MCF 10A (cell line): ENCODE measurements at regions of chr20 and their contacts with region 1.

Region 1: GRCh38 chr20:17898548-17898994 is 70.0 kb downstream of the SNX5 start:
- DNase-seq: peak; percentile 78
- H3K4me3 Mint-ChIP-seq: no peak overlapping the region
- H3K27ac Mint-ChIP-seq: no peak overlapping the region
- H3K4me1 Mint-ChIP-seq: peaks cover 21% of the 10 kb centered on the region
- H3K27me3 Mint-ChIP-seq: no peaks in the 10 kb centered on the region
- CTCF ChIP-seq: peak; percentile 91

Region 2: GRCh38 chr20:17536944-17537444 is 361.6 kb before region 1 on chr20:
- CTCF ChIA-PET with region 1: interaction called, 16 read pairs
- POLR2A ChIA-PET with region 1: interaction called, 3 read pairs
- intact Hi-C with region 1: loop called (anchors 2 kb)
- DNase-seq: peak; percentile 83
- H3K4me3 Mint-ChIP-seq: no peak overlapping the region
- H3K27ac Mint-ChIP-seq: no peak overlapping the region
- H3K4me1 Mint-ChIP-seq: peaks cover 20% of the 10 kb centered on the region
- H3K27me3 Mint-ChIP-seq: no peaks in the 10 kb centered on the region
- CTCF ChIP-seq: peak; percentile 84

Region 3: GRCh38 chr20:17654649-17655285 is 243.8 kb before region 1 on chr20:
- CTCF ChIA-PET with region 1: interaction called, 16 read pairs
- POLR2A ChIA-PET with region 1: no interaction called
- intact Hi-C with region 1: loop called (anchors 1 kb)
- DNase-seq: peak; percentile 39
- H3K4me3 Mint-ChIP-seq: no peak overlapping the region
- H3K27ac Mint-ChIP-seq: no peak overlapping the region
- H3K4me1 Mint-ChIP-seq: peaks cover 15% of the 10 kb centered on the region
- H3K27me3 Mint-ChIP-seq: no peaks in the 10 kb centered on the region
- CTCF ChIP-seq: peak; percentile 44

Region 4: DNA sequence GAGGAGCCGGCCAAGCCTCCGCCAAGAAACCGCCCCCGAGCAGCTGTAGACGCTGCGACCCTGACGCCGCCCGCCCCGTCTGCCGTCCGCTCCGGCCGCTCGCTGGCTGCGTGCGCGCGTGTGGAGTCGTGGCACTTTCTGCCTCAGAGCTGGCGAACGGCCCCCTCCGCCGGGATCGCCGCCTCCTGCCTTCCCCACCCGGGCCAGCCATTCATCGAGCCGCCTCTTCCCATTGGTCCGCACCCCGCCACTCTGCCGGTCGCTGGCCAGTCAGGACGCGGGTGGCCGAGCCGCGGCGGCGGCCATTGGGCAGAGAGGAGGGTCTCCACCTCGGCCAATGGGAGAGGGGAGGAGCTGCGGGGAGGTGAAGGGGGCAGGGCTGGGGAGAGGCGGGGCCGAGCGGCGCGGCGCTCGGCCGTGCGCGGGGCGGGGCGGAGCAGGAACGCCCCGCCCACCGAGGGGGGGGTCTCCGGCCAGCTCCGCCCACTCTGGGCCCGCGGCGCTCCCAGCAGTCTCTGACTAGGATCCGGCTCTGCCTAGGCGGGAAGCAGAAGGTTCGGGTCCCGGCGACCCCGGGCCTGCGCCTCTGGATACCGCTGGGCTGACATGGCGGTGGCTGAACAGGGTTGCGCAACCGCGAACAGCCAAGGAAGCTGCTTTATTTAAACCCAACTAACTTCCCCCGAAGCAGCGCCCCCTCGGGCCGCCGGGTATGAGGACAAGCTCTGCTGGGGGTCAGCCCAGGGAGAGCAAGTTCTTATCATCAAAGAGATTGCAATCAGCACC is 216.3 kb before region 1 on chr20 and contains the start of gene RRBP1:
- CTCF ChIA-PET with region 1: interaction called, 156 read pairs
- POLR2A ChIA-PET with region 1: interaction called, 46 read pairs
- intact Hi-C with region 1: loop called (anchors 1 kb)
- DNase-seq: peak; percentile 97
- H3K4me3 Mint-ChIP-seq: peak within 1 kb of the TSS; percentile 81
- H3K27ac Mint-ChIP-seq: peak within 1 kb of the TSS; percentile 61
- H3K4me1 Mint-ChIP-seq: peaks cover 11% of the 10 kb centered on the region
- H3K27me3 Mint-ChIP-seq: peaks cover 41% of the 10 kb centered on the region
- CTCF ChIP-seq: peak; percentile 65
- total RNA-seq, gene RRBP1: 203 and 244 TPM in 2 replicates

Region 5: GRCh38 chr20:17808357-17808756 is 90.2 kb before region 1 on chr20:
- CTCF ChIA-PET with region 1: interaction called, 10 read pairs
- POLR2A ChIA-PET with region 1: no interaction called
- intact Hi-C with region 1: no loop called
- DNase-seq: no peak
- H3K4me3 Mint-ChIP-seq: no peak overlapping the region
- H3K27ac Mint-ChIP-seq: no peak overlapping the region
- H3K4me1 Mint-ChIP-seq: peaks cover 7% of the 10 kb centered on the region
- H3K27me3 Mint-ChIP-seq: no peaks in the 10 kb centered on the region
- CTCF ChIP-seq: no peak

Region 6: DNA sequence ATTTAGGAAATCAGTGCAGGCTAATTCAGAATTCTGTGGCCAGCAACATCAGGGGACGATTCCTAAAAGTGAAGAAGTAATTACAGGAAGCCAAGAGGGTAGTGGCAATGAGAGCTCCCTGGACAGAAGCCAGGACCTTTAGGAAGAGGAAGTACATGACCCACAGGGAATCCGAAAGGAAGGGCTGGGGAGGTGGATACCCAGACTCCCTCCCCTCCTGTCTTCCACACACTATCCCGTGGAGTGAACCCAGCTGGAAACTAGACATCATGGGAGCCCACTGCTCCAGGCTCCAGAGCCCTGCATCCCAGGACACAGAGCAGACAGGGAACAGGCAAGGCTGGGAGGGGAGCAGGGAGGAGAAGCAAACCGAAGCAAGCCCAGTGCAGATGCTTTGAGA is 13.0 kb before region 1 on chr20:
- CTCF ChIA-PET with region 1: interaction called, 22 read pairs
- POLR2A ChIA-PET with region 1: interaction called, 4 read pairs
- intact Hi-C with region 1: no loop called
- DNase-seq: peak; percentile 54
- H3K4me3 Mint-ChIP-seq: no peak overlapping the region
- H3K27ac Mint-ChIP-seq: no peak overlapping the region
- H3K4me1 Mint-ChIP-seq: peaks cover 17% of the 10 kb centered on the region
- H3K27me3 Mint-ChIP-seq: no peaks in the 10 kb centered on the region
- CTCF ChIP-seq: no peak

Region 7: GRCh38 chr20:18079756-18080353 is 181.3 kb after region 1 on chr20:
- CTCF ChIA-PET with region 1: no interaction called
- POLR2A ChIA-PET with region 1: no interaction called
- intact Hi-C with region 1: no loop called
- DNase-seq: no peak
- H3K4me3 Mint-ChIP-seq: no peak overlapping the region
- H3K27ac Mint-ChIP-seq: no peak overlapping the region
- H3K4me1 Mint-ChIP-seq: no peaks in the 10 kb centered on the region
- H3K27me3 Mint-ChIP-seq: no peaks in the 10 kb centered on the region
- CTCF ChIP-seq: no peak

Region 8: DNA sequence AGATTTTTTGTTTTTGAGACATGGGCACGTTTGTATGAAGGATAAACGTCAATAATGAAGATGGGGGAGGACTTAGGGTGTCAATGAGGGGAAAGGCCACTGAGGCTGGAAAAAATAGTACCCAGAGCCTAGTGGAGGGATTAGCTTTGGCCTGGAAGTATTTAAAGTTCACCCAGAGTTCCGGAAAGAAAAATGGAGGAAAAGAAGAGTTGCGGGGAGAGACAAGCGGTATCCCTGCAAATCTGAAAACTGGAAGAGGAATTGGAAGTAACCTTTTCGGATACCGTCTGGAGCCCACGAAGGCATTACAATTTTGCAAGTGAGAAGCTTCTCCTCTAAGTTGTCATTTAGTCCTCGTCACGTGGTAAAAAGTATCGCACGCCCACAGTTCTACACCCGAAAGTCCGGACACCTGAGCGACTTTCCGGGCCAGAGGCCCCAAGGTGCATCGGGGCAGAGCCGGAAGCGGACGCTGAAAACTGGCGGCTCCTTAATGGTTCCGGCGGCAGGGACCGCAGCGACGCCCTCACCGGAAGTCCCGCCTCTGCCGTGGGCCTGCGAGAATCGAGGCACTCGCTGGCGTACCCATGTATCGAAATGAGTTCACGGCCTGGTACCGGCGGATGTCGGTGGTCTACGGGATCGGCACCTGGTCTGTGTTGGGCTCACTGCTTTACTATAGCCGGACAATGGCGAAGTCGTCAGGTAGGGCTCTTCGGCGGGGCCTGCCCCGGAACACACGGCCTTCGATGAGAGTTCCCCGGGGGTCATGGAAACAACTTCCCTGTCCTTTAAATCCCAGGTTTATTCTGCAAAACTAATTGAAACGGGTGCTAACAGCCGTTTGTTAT is 668.5 kb after region 1 on chr20 and contains the start of gene SMIM26:
- CTCF ChIA-PET with region 1: no interaction called
- POLR2A ChIA-PET with region 1: no interaction called
- intact Hi-C with region 1: no loop called
- DNase-seq: peak; percentile 94
- H3K4me3 Mint-ChIP-seq: peak within 1 kb of the TSS; percentile 100
- H3K27ac Mint-ChIP-seq: peak within 1 kb of the TSS; percentile 97
- H3K4me1 Mint-ChIP-seq: peaks cover 19% of the 10 kb centered on the region
- H3K27me3 Mint-ChIP-seq: no peaks in the 10 kb centered on the region
- CTCF ChIP-seq: no peak
- total RNA-seq, gene SMIM26: 106 and 127 TPM in 2 replicates